Head of caudate nucleus (tissue), 42 donors: ENCODE measurements at regions of chr2 and their contacts with region 1.

Region 1: DNA sequence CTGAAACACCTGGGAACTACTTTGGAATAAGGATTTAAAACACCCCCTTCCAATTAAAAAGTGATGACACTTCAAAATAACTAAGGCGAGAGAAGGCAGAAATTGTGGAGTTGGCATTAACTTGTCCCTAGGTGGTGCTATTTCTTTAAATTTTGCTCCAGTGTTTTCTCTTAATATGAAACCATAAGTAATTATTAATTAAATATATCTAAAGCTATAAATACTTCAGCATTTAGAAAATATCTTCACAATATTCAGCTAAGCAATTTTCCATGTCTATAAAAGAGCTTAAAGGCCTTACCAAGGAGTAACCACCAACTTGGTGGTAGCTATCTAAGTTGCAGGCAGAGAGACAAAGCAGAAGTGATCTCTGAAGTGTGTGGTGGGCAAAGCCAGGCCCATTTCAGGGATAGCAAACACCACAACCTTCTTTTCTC is 186.8 kb upstream of the PGAP1 start:
- DNase-seq: peak in 2 of 42 donors; percentile 34 to 36

Region 2: GRCh38 chr2:196849895-196850294 is 263.4 kb before region 1 on chr2:
- intact Hi-C with region 1: loop called (anchors 5 kb)
- DNase-seq: peak in 31 of 42 donors; percentile 7 to 77 (median 38)

Region 3: DNA sequence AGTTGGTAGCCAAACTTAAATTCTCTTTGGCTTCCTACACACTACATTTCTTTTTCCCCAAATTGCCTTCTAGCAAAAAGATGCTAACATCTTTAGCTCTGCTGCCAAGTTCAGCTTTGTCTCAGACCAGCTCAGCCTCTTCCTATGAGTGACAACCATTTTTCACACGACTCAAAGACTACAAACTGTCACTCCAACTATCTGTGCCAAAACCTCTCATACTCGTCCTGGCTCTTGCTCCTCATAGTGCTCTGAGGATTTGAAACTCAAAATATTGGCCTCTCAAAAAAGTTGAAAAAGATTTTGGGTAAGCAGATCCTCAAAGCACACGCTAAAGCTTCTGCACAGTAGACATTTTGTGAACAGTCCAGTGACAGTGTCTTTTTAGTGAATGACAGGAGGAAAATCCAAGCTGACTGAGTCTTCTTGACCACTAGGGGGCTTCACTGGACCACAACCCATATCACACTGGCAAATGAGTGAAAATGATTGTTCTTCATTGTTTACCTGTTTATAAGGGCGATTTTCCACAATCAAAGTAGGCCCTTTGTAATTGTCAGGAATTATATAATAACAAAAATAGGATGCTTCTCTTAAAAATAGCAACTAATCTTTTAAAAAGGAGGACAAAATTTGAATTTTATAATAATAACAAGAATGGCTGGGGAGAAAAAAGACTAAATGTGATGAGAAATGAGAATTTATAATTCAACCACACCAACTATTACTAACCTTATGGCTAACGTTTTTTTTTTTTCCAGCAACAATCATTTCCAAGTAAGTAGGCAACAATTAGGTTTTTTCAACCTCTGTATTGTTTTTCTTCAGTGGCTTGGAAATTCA is 101.3 kb before region 1 on chr2:
- intact Hi-C with region 1: loop called (anchors 5 kb)
- DNase-seq: peak in 32 of 42 donors; percentile 22 to 82 (median 60)

Region 4: GRCh38 chr2:197310271-197310985 is 197.1 kb after region 1 on chr2 and contains the start of gene ANKRD44:
- intact Hi-C with region 1: loop called (anchors 5 kb)
- DNase-seq: peak; percentile 73 to 96 (median 90)

Region 5: GRCh38 chr2:197378494-197379307 is 265.4 kb after region 1 on chr2:
- intact Hi-C with region 1: loop called (anchors 10 kb)
- DNase-seq: peak; percentile 9 to 85 (median 63)